ENCODE measurements at regions of chr13 and their contacts with region 1.

Region 1: DNA sequence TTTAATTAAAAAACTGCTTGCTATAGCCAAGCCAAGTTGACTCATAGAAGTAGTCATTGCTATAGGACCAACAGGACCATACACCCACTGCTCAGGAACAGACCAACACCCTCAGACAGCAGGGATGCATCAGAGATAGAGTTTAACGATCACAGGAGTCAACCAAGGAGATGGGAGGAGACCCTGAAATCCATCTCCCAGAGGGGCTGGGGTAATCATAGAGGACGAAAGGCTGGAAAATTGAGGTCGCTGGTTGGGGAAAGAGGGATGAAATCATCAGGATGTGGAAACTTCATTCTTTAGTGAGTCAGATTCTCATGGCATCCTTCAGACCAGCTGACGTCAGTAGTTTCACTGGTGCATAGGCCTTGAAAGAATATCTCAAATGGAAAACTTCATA is 160.4 kb upstream of the GPC6 start:
- DNase-seq: peak; percentile 91
- ATAC-seq: peak; percentile 87
- H3K4me3 ChIP-seq: no peak overlapping the region
- H3K27ac ChIP-seq: peak overlapping the region; percentile 65
- H3K4me1 ChIP-seq: peaks cover 3% of the 10 kb centered on the region
- H3K27me3 ChIP-seq: no peaks in the 10 kb centered on the region
- CTCF ChIP-seq: no peak
- POLR2A ChIP-seq: no peak
- RAD21 ChIP-seq: no peak

Region 2: GRCh38 chr13:93080587-93080986 is 14.4 kb after region 1 on chr13:
- CTCF ChIA-PET with region 1: interaction called, 4 read pairs
- POLR2A ChIA-PET with region 1: no interaction called
- dilution Hi-C with region 1: no loop called
- in situ Hi-C with region 1: no loop called
- intact Hi-C with region 1: loop called (anchors 1 kb)
- DNase-seq: peak; percentile 10
- ATAC-seq: no peak
- H3K4me3 ChIP-seq: no peak overlapping the region
- H3K27ac ChIP-seq: no peak overlapping the region
- H3K4me1 ChIP-seq: no peaks in the 10 kb centered on the region
- H3K27me3 ChIP-seq: no peaks in the 10 kb centered on the region; the same call in 1 of the 2 replicates
- CTCF ChIP-seq: no peak
- POLR2A ChIP-seq: no peak
- RAD21 ChIP-seq: no peak

Measured in IMR-90 (cell line).